AG04449 (cell line): ENCODE measurements at regions of chr17 and their contacts with region 1.

Region 1: DNA sequence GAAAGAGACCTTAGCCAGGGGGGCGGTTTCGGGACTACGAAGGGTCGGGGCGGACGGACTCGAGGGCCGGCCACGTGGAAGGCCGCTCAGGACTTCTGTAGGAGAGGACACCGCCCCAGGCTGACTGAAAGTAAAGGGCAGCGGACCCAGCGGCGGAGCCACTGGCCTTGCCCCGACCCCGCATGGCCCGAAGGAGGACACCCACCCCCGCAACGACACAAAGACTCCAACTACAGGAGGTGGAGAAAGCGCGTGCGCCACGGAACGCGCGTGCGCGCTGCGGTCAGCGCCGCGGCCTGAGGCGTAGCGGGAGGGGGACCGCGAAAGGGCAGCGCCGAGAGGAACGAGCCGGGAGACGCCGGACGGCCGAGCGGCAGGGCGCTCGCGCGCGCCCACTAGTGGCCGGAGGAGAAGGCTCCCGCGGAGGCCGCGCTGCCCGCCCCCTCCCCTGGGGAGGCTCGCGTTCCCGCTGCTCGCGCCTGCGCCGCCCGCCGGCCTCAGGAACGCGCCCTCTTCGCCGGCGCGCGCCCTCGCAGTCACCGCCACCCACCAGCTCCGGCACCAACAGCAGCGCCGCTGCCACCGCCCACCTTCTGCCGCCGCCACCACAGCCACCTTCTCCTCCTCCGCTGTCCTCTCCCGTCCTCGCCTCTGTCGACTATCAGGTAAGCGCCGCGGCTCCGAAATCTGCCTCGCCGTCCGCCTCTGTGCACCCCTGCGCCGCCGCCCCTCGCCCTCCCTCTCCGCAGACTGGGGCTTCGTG is at the start of gene MAPT:
- DNase-seq: peak; percentile 24
- H3K4me3 ChIP-seq: peak within 1 kb of the TSS; percentile 70
- CTCF ChIP-seq: peak; percentile 93

Region 2: GRCh38 chr17:45857977-45858709 is 36.1 kb before region 1 on chr17:
- CTCF ChIA-PET with region 1: no interaction called
- POLR2A ChIA-PET with region 1: no interaction called
- DNase-seq: no peak
- H3K4me3 ChIP-seq: no peak overlapping the region
- CTCF ChIP-seq: no peak

Region 3: GRCh38 chr17:45907750-45908395 is 13.7 kb after region 1 on chr17:
- CTCF ChIA-PET with region 1: interaction called, 27 read pairs
- POLR2A ChIA-PET with region 1: no interaction called
- DNase-seq: no peak
- H3K4me3 ChIP-seq: no peak overlapping the region
- CTCF ChIP-seq: no peak